Dendritic cell treated with granulocyte-macrophage colony-stimulating factor and Interleukin-4, amounts not matched to agents 40 ng/mL and 50 ng/mL, for 4 days (primary cell): ENCODE measurements at regions of chr14 and their contacts with region 1.

Region 1: GRCh38 chr14:72104011-72104613 is 171.9 kb downstream of the RGS6 start:
- H3K4me3 Mint-ChIP-seq: no peak overlapping the region
- H3K27ac Mint-ChIP-seq: no peak overlapping the region
- H3K4me1 Mint-ChIP-seq: no peaks in the 10 kb centered on the region
- H3K27me3 Mint-ChIP-seq: no peaks in the 10 kb centered on the region

Region 2: GRCh38 chr14:72291908-72292688 is 188.0 kb after region 1 on chr14:
- intact Hi-C with region 1: loop called (anchors 10 kb)
- H3K4me3 Mint-ChIP-seq: no peak overlapping the region
- H3K27ac Mint-ChIP-seq: no peak overlapping the region
- H3K4me1 Mint-ChIP-seq: no peaks in the 10 kb centered on the region
- H3K27me3 Mint-ChIP-seq: peaks cover 1% of the 10 kb centered on the region

Region 3: DNA sequence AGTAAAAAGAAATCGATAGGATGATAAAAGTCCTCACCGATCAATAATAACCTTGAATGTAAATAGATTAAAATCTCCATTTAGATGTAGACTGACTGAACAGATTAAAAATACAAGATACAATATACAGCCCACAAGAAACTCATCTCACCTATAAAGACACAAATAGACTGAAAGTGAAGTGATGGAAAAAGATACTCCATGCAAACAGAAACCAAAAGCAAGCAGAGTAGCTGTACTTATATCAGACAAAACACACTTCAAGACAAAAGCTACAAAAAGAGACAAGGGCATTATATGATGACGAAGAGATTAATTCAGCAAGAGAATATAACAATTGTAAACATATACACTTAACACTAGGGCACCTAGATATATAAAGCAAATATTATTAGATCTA is 272.9 kb after region 1 on chr14:
- intact Hi-C with region 1: no loop called
- H3K4me3 Mint-ChIP-seq: no peak overlapping the region
- H3K27ac Mint-ChIP-seq: no peak overlapping the region
- H3K4me1 Mint-ChIP-seq: peaks cover 9% of the 10 kb centered on the region
- H3K27me3 Mint-ChIP-seq: no peaks in the 10 kb centered on the region

Region 4: GRCh38 chr14:72420725-72421474 is 316.8 kb after region 1 on chr14:
- intact Hi-C with region 1: loop called (anchors 5 kb)
- H3K4me3 Mint-ChIP-seq: no peak overlapping the region
- H3K27ac Mint-ChIP-seq: no peak overlapping the region
- H3K4me1 Mint-ChIP-seq: no peaks in the 10 kb centered on the region
- H3K27me3 Mint-ChIP-seq: no peaks in the 10 kb centered on the region